ENCODE measurements at regions of chr11 and their contacts with region 1.

Region 1: DNA sequence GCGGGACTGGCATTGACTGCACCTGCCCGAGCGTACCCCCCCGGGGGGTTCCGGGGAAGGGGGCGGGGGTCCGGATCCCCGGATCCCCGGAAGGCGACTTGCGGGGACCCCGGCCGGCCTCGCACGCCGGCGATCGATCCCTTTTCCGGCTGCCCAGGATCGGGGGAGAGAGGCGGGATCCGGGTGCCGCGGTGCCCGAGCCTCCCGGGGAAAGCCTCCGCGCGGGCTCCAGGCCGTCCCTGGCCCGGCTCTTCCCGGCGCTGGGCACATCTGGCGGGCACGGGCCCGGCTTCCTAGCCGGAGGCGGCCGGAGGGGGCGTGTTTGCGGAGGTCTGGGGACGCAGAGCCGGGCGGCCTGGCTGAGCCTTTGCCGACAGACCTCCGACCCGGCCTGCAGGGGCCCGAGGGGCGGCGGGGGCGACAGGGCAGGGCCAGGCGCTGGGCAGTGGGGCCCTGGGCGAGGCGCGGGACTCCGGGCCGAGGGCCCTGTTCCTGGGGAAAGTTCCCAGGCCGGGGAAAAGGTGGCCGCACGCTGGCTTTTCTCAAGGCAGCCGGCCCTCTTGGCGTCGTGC is 777 bp downstream of the PTPRJ start:
- DNase-seq: peak; percentile 39
- H3K4me3 Mint-ChIP-seq: peak overlapping the region; percentile 89
- H3K27ac Mint-ChIP-seq: peak overlapping the region; percentile 84
- H3K4me1 Mint-ChIP-seq: peaks cover 24% of the 10 kb centered on the region
- H3K27me3 Mint-ChIP-seq: no peaks in the 10 kb centered on the region

Region 2: GRCh38 chr11:48020092-48020755 is 39.1 kb after region 1 on chr11:
- CTCF ChIA-PET with region 1: interaction called, 4 read pairs
- POLR2A ChIA-PET with region 1: interaction called, 4 read pairs
- intact Hi-C with region 1: loop called (anchors 2 kb)
- DNase-seq: peak; percentile 80
- H3K4me3 Mint-ChIP-seq: peak overlapping the region; percentile 68
- H3K27ac Mint-ChIP-seq: peak overlapping the region; percentile 92
- H3K4me1 Mint-ChIP-seq: peaks cover 72% of the 10 kb centered on the region
- H3K27me3 Mint-ChIP-seq: no peaks in the 10 kb centered on the region

Region 3: GRCh38 chr11:48034926-48035871 is 54.1 kb after region 1 on chr11:
- CTCF ChIA-PET with region 1: no interaction called
- POLR2A ChIA-PET with region 1: no interaction called
- intact Hi-C with region 1: no loop called
- DNase-seq: no peak
- H3K4me3 Mint-ChIP-seq: no peak overlapping the region
- H3K27ac Mint-ChIP-seq: peak overlapping the region; percentile 36
- H3K4me1 Mint-ChIP-seq: peaks cover 60% of the 10 kb centered on the region
- H3K27me3 Mint-ChIP-seq: no peaks in the 10 kb centered on the region

Measured in activated CD4-positive, alpha-beta memory T cell treated with anti-CD3 and anti-CD28 coated beads for 36 hours (primary cell).